Activated CD4-positive, alpha-beta T cell treated with anti-CD3 and anti-CD28 coated beads for 36 hours (primary cell): ENCODE measurements at regions of chr10 and their contacts with region 1.

Region 1: DNA sequence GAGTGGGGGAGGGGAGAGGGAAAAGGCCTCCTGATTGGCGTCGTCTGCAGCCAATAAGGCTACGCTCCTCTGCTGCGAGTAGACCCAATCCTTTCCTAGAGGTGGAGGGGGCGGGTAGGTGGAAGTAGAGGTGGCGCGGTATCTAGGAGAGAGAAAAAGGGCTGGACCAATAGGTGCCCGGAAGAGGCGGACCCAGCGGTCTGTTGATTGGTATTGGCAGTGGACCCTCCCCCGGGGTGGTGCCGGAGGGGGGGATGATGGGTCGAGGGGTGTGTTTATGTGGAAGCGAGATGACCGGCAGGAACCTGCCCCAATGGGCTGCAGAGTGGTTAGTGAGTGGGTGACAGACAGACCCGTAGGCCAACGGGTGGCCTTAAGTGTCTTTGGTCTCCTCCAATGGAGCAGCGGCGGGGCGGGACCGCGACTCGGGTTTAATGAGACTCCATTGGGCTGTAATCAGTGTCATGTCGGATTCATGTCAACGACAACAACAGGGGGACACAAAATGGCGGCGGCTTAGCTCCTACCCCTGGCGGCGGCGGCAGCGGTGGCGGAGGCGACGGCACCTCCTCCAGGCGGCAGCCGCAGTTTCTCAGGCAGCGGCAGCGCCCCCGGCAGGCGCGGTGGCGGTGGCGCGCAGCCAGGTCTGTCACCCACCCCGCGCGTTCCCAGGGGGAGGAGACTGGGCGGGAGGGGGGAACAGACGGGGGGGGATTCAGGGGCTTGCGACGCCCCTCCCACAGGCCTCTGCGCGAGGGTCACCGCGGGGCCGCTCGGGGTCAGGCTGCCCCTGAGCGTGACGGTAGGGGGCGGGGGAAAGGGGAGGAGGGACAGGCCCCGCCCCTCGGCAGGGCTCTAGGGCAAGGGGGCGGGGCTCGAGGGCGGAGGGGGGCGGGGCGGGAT is at the start of gene KAT6B:
- DNase-seq: peak; percentile 100
- ATAC-seq: peak; percentile 89
- H3K4me3 Mint-ChIP-seq: peak within 1 kb of the TSS; percentile 88
- H3K27ac Mint-ChIP-seq: peak within 1 kb of the TSS; percentile 84
- H3K4me1 Mint-ChIP-seq: peaks cover 70% of the 10 kb centered on the region
- H3K27me3 Mint-ChIP-seq: no peaks in the 10 kb centered on the region
- total RNA-seq, gene KAT6B: 20.0 to 20.9 TPM

Region 2: DNA sequence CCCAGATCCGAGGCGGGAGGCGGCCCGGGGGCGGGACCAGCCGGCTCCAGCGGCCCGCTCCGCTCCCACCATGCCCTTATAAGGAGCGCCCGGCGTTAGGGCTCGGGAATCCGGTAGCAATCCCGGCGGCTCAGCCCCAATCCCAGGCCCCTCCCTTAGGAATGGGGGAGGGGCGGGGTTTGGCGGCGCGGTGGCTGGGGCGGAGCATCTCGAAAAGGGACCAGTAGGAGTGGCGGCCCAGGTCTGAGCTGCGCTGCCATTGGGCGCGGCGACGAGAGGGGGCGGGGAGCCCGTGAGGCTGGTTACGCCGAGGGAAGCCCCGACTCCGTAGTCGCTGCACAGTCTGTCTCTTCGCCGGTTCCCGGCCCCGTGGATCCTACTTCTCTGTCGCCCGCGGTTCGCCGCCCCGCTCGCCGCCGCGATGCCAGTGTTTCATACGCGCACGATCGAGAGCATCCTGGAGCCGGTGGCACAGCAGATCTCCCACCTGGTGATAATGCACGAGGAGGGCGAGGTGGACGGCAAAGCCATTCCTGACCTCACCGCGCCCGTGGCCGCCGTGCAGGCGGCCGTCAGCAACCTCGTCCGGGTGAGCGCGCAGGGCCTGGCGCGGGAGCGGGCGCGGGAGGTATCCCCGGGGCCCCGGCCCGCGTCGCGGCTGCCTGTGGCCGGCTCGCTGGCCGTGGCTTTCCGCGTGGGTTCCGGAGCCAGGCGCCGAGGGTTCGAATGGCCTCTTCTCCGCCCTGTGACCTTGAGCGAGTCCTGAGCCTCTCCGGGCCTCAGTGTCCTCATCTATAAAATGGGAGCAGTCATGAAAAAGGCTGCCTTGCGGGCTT is 828.4 kb before region 1 on chr10 and contains the start of gene VCL:
- CTCF ChIA-PET with region 1: no interaction called
- POLR2A ChIA-PET with region 1: no interaction called
- intact Hi-C with region 1: loop called in 1 of 2 experiments (anchors 1 kb)
- DNase-seq: peak; percentile 97
- ATAC-seq: peak; percentile 98
- H3K4me3 Mint-ChIP-seq: peak within 1 kb of the TSS; percentile 89
- H3K27ac Mint-ChIP-seq: peak within 1 kb of the TSS; percentile 97
- H3K4me1 Mint-ChIP-seq: peaks cover 39% of the 10 kb centered on the region
- H3K27me3 Mint-ChIP-seq: no peaks in the 10 kb centered on the region
- total RNA-seq, gene VCL: 20.7 to 22.7 TPM

Region 3: DNA sequence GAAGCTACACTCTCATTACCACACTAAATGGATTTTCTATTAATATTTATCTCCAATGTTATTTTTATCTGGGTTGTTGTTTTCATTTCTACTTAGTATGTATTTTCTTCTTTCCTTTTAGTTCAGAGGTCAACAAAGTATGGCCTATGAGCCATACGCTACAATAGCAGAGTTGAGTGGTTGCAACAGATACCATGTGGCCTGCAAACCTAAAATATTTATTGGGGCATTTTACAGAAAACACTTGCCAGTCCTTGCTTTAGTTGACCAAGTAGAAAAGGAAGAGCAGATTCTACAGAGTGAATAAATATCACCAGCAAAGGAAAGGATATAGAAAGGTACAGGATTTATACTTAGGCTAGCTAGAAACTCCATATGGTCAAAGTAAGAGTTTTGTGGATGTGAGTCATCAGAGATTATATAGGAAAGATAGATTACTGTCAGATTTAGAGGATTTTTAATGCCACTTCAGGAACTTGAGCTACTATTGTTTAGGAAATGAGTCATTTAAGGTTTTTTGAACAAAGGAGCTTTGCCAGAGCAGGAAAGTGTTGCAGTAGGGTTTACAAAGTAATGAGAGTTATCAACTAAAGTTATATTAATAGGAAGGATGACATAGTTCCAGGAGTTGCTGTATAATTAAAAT is 323.3 kb before region 1 on chr10:
- CTCF ChIA-PET with region 1: no interaction called
- POLR2A ChIA-PET with region 1: no interaction called
- intact Hi-C with region 1: loop called in 1 of 2 experiments (anchors 1 kb)
- DNase-seq: no peak
- ATAC-seq: peak; percentile 63
- H3K4me3 Mint-ChIP-seq: peak overlapping the region; percentile 6
- H3K27ac Mint-ChIP-seq: peak overlapping the region; percentile 81
- H3K4me1 Mint-ChIP-seq: peaks cover 47% of the 10 kb centered on the region
- H3K27me3 Mint-ChIP-seq: no peaks in the 10 kb centered on the region

Region 4: GRCh38 chr10:74651565-74651964 is 174.8 kb before region 1 on chr10:
- CTCF ChIA-PET with region 1: no interaction called
- POLR2A ChIA-PET with region 1: no interaction called
- intact Hi-C with region 1: no loop called
- DNase-seq: no peak
- ATAC-seq: peak; percentile 63
- H3K4me3 Mint-ChIP-seq: no peak overlapping the region
- H3K27ac Mint-ChIP-seq: no peak overlapping the region
- H3K4me1 Mint-ChIP-seq: peaks cover 7% of the 10 kb centered on the region
- H3K27me3 Mint-ChIP-seq: no peaks in the 10 kb centered on the region

Region 5: DNA sequence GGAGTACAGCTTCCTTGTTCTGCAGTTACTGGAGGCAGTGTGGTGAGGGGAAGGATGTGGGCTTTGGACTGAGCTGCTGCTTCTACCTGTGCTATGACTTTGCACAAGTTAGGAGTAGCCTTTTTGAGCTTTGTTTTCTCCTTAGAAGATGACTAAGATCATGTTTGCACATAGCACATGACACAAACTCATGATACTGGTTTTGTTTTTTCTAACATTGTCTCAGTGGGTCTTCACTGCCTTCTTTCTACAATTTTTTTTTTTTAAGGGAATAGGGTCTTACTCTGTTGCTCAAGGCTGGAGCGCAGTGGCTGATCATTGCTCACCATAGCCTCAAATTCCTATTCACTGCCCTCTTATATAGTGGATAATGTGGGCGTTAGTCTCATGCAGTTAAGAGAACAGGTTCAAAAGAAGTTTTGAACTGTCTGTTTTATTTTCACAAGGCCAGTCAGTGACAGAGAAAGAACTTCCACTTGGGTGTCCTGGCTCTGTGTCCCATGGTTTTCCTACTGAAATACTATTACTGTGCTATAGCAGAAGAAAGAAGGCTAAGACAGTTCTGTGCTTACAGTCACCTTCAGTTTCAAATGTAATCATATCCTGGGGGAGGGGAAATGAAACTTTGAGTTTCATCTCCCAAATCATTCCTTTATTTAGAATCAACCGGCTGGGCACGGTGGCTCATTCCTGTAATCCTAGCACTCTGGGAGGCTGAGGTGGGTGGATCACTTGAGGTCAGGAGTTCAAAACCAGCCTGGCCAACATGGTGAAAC is 72.0 kb after region 1 on chr10:
- CTCF ChIA-PET with region 1: no interaction called
- POLR2A ChIA-PET with region 1: no interaction called
- intact Hi-C with region 1: loop called in 1 of 2 experiments (anchors 2 kb)
- DNase-seq: peak; percentile 56
- ATAC-seq: peak; percentile 92
- H3K4me3 Mint-ChIP-seq: peak overlapping the region; percentile 39
- H3K27ac Mint-ChIP-seq: peak overlapping the region; percentile 82
- H3K4me1 Mint-ChIP-seq: peaks cover 62% of the 10 kb centered on the region
- H3K27me3 Mint-ChIP-seq: no peaks in the 10 kb centered on the region

Region 6: GRCh38 chr10:75042292-75042974 is 216.0 kb after region 1 on chr10:
- CTCF ChIA-PET with region 1: interaction called, 3 read pairs
- POLR2A ChIA-PET with region 1: no interaction called
- intact Hi-C with region 1: loop called in 1 of 2 experiments (anchors 1 kb)
- DNase-seq: peak; percentile 28
- ATAC-seq: peak; percentile 82
- H3K4me3 Mint-ChIP-seq: no peak overlapping the region
- H3K27ac Mint-ChIP-seq: peak overlapping the region; percentile 80
- H3K4me1 Mint-ChIP-seq: peaks cover 57% of the 10 kb centered on the region
- H3K27me3 Mint-ChIP-seq: peaks cover 5% of the 10 kb centered on the region